ENCODE measurements at regions of chr1 and their contacts with region 1.

Region 1: DNA sequence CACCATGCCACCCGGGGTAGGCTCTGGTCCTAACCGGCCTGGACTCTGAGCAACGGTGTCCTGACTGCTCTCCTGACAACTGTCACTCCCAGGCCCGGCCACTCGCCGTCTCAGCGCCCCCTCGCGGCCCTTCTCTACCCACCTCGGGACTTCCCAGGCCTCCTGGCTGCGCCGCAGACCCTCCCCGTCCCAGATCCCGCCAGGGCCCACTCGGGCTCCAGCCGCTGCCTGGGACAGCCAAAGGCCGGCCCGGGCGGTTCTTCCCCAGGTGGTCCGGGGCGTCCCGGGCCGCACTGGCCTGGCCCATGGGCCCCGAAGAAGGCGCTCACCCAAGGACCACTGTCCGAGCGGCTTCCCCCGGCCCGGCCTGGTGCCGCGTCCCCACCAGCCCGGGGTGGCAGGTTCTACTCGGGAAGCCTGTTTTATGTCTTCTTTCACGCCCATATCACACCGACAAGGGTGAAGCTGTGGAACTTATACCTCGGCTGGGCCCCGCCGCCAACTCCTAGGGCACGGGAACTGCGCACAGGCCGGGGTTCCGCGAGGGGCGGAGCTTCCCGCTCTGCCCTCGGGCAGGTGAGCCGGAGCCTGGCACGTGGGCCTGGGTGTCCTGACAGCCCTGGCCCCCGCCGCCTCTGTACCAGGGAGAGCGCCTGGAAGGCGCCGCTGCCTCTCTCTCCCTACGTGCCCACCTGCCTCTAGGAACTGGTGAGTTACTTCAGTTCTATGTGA is 138.3 kb downstream of the TTLL7 start:
- DNase-seq: peak; percentile 57
- H3K4me3 ChIP-seq: peak overlapping the region; percentile 52 to 86 (median 62)
- H3K27ac ChIP-seq: peak overlapping the region; percentile 78
- H3K4me1 ChIP-seq: peaks cover 13% of the 10 kb centered on the region
- H3K27me3 ChIP-seq: no peaks in the 10 kb centered on the region
- CTCF ChIP-seq: peak; percentile 51 to 86

Region 2: DNA sequence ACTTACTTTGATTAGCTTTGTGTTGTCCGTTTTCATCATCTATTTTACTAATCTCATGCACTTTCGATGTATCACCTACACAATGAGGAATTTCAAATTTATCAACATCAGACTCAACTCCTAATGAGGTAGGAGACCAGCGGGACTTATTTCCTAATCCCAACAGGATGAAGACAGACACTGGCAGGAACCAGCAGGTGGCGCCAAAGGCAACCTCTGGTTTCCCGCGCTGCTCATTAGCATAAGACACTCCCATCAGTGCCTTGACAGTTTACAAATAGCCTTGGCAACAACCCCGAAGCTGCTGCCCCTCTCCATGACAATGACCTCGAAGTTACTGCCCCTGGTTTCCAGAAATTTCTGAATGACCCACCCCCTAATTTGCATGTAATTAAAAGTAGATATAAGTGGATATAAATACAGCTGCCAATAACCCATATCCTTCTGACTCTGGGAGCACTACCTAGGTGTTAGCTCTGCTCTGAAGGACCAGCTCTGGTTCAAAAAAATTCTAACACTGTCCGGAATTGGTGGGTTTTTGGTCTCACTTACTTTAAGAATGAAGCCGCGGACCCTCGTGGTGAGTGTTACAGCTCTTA is 1085.2 kb before region 1 on chr1:
- CTCF ChIA-PET with region 1: no interaction called
- dilution Hi-C with region 1: no loop called
- in situ Hi-C with region 1: no loop called
- intact Hi-C with region 1: loop called (anchors 1 kb)
- DNase-seq: peak; percentile 3
- H3K4me3 ChIP-seq: no peak overlapping the region
- H3K27ac ChIP-seq: no peak overlapping the region
- H3K4me1 ChIP-seq: no peaks in the 10 kb centered on the region
- H3K27me3 ChIP-seq: no peaks in the 10 kb centered on the region
- CTCF ChIP-seq: peak; percentile 47 to 54